ENCODE measurements at regions of chr22 and their contacts with region 1.

Region 1: DNA sequence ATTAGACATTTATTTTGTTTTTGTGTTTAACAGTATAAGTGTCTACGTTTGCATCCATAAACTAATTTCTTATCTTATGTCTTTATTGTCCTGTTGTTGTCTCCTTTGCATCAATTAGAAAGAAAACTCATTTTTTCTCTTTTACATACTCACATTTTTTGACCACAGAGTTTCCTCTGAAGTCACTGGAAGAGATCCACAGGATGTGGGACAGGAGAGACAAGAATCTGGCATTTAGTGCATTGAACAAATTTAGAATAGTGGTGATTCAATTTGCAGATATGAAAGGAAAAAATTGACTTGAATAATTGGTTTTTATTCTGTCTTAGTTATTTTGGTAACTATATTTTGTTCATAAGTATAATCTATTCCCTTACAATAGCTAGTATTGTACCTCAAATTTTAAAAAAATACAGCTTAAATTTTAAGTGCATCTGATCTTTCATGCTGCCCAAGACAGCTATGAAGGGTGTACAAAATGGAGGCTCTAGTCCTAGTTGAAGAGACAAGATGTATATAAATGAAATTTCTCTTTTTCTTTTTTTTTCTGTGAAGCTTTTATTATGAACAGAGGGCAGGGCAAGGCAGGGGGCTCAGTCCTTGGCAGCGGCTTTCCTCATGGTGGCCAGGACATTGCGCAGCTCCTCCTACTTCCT is 24.4 kb downstream of the HORMAD2 start:
- DNase-seq: peak; percentile 49
- ATAC-seq: peak; percentile 80
- H3K4me3 Mint-ChIP-seq: peak overlapping the region; percentile 24
- H3K27ac Mint-ChIP-seq: peak overlapping the region; percentile 78
- H3K4me1 Mint-ChIP-seq: peaks cover 55% of the 10 kb centered on the region
- H3K27me3 Mint-ChIP-seq: peaks cover 2% of the 10 kb centered on the region

Region 2: DNA sequence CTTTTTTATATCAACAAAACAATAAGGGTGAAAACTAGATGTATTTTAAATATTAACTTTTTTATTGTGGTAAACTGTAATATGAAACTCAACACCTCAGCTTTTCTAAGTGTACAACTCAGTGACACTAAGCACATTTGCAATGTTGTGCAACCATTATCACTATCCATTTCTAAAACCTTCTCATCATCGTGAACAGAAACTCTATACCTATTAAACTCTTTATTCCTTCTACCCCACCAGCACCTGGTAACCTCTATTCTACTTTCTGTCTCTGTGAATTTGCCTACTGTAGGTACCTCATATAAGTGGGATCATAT is 15.0 kb before region 1 on chr22:
- CTCF ChIA-PET with region 1: interaction called, 10 read pairs
- DNase-seq: no peak
- ATAC-seq: no peak
- H3K4me3 Mint-ChIP-seq: no peak overlapping the region
- H3K27ac Mint-ChIP-seq: no peak overlapping the region
- H3K4me1 Mint-ChIP-seq: peaks cover 17% of the 10 kb centered on the region
- H3K27me3 Mint-ChIP-seq: peaks cover 30% of the 10 kb centered on the region

Region 3: DNA sequence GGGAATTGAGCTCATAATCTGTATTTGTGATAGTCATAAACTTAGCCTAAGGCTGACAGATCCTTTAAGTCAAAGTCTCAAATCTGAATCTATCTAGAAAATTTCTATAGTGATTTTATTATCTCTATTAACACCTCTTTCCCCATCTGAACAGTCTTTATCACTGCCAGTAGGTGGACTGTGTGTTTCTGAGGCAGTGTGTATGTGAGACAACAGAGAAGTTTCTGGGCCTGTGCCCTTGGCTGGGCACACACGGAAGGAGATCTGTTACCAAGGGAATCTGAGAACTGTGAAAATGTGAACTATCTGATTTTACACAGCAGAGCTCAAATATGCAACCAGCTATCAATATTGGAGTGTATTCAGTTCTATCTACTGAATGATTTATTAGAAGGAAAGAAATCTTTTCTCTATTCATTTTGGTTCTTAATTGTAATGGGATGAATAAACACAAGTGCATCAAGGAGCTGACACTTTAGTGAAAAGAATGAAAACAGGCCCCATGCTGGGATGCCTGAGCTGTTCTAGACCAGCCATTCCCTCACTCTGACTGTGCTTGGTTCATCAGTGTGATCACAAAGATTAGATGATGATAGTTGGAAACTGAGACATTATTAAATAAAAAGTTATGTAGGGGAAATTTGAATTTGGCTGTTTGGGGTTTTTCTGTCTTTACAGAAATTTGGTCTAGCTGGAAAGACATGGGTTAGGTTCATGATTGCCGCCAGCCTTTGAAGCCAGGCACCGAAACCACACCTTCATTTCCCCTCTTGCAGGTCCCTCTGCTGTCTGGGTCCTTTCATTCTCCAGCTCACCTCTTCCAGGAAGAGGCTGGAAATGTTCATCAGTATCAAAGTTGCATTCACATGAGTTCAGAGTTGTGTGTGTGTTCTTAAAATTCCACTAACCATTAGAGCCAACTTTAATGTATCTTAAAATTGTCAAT is 73.8 kb after region 1 on chr22:
- CTCF ChIA-PET with region 1: interaction called, 10 read pairs
- DNase-seq: peak; percentile 63
- ATAC-seq: peak; percentile 75
- H3K4me3 Mint-ChIP-seq: no peak overlapping the region
- H3K27ac Mint-ChIP-seq: peak overlapping the region; percentile 89
- H3K4me1 Mint-ChIP-seq: peaks cover 75% of the 10 kb centered on the region
- H3K27me3 Mint-ChIP-seq: no peaks in the 10 kb centered on the region

Region 4: DNA sequence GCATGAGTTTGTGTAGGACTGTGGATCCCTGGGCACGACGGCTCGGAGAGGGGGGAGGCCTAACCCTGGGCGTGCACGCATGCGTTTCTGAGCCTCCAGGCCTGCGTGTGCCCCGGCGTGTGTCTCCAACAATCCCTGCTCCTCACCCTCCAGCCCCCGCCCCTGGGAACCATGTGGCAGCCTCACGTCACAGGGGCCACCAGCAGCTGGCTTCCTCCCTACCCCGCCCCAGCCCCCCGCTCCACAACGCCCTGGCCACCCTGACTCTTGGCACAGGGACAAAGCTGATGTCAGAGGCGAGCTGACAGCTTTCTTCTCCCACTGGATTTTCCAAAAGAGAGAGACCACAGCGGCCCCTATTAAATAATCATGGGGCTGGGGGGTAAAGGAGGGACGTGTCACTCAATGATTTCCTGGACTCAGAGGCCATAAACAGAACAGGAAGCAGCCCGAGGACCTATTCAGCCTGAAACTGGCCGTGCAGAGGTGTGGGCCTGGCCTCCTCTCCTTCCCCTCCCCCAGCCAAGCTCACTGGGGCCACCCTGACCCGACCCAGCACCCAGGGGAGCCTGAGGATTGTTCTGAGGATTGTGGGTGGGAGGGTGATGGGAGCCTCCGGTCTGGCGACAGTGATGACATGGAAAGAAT is 148.7 kb after region 1 on chr22:
- CTCF ChIA-PET with region 1: interaction called, 103 read pairs
- DNase-seq: no peak
- ATAC-seq: no peak
- H3K4me3 Mint-ChIP-seq: no peak overlapping the region
- H3K27ac Mint-ChIP-seq: peak overlapping the region; percentile 58
- H3K4me1 Mint-ChIP-seq: peaks cover 72% of the 10 kb centered on the region
- H3K27me3 Mint-ChIP-seq: no peaks in the 10 kb centered on the region

Region 5: GRCh38 chr22:30373331-30374325 is 269.0 kb after region 1 on chr22:
- CTCF ChIA-PET with region 1: no interaction called
- DNase-seq: no peak
- ATAC-seq: no peak
- H3K4me3 Mint-ChIP-seq: no peak overlapping the region
- H3K27ac Mint-ChIP-seq: no peak overlapping the region
- H3K4me1 Mint-ChIP-seq: no peaks in the 10 kb centered on the region
- H3K27me3 Mint-ChIP-seq: no peaks in the 10 kb centered on the region

Region 6: DNA sequence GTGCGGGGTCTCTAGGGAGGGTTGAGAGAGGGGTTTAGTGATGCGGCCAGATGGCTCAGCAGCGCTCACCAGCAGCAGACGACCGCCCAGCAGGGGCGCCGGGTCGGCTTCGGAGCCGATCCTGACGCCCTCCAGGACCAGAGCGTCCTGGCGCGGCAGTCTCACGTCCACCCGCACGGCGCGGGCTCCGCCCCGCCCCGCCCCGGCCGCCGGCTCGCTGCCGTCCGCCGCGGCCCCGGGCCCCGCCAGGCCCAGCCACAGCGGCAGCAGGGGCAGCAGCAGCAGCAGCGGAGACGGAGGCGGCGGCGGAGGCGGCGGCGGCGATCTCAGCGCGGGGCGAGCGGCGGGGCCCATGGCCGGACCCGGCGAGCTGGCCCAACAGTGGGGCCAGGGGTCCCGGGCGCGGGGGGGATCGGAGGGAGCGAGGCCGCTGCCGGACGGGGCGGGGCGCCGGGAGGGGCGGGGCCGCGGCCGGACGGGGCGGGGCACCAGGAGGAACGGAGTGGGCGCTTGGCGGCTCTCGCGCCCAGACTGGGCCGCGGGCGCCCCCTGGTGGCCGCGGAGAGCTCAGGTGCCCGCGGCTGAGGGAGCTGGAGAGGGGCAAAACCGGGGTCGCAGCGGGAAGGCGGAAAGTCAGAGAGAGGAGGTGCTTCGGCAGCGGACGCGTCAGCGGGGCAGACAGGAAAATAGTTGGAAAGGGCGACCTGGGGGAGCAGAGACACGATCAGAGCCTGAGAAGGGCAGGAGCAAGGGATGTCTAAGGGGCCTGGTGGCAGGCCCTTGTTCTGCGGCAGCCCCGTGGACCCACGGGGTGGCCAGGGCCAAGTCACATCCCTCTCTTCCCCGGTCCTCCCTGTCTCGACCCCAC is 282.6 kb after region 1 on chr22 and contains the start of gene RNF215:
- CTCF ChIA-PET with region 1: interaction called, 31 read pairs
- DNase-seq: peak; percentile 82
- ATAC-seq: peak; percentile 91
- H3K4me3 Mint-ChIP-seq: peak within 1 kb of the TSS; percentile 76
- H3K27ac Mint-ChIP-seq: peak within 1 kb of the TSS; percentile 78
- H3K4me1 Mint-ChIP-seq: peaks cover 22% of the 10 kb centered on the region
- H3K27me3 Mint-ChIP-seq: no peaks in the 10 kb centered on the region
- total RNA-seq, gene RNF215: 8.5 to 10.5 TPM

Measured in activated CD8-positive, alpha-beta memory T cell treated with anti-CD3 and anti-CD28 coated beads, Interleukin-2, amount 10 ng/mL, durations not matched to agents 7 days and 5 days (primary cell).